Sciatic nerve (tissue), 2 donors: ENCODE measurements at regions of chr19 and their contacts with region 1.

Region 1: GRCh38 chr19:4052050-4052999 is 14.4 kb downstream of the ZBTB7A start:
- DNase-seq: peak; percentile 83
- ATAC-seq: peak; percentile 70

Region 2: GRCh38 chr19:4014541-4015491 is 37.5 kb before region 1 on chr19:
- intact Hi-C with region 1: loop called (anchors 5 kb)
- DNase-seq: no peak
- ATAC-seq: peak; percentile 56

Region 3: DNA sequence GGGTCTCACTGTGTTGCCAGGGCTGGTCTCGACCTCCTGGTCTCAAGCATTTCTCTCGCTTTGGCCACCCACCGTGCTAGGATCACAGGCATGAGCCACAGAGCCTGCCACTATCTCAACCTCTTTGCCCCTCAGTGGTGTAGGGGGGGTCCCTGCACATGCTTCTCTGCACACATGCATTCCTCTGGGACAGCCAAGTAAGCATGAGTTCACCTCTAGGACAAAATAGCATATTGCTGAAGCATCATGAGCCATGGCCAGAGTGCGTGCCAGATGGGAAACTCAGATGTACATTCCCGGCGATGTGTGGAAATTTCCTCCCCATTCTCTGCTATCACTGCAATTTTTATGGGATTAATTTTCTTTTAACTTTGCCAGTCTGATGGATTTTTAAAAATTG is 373.2 kb after region 1 on chr19:
- intact Hi-C with region 1: no loop called
- DNase-seq: no peak
- ATAC-seq: no peak